SK-N-SH (cell line): ENCODE measurements at regions of chr22 and their contacts with region 1.

Region 1: DNA sequence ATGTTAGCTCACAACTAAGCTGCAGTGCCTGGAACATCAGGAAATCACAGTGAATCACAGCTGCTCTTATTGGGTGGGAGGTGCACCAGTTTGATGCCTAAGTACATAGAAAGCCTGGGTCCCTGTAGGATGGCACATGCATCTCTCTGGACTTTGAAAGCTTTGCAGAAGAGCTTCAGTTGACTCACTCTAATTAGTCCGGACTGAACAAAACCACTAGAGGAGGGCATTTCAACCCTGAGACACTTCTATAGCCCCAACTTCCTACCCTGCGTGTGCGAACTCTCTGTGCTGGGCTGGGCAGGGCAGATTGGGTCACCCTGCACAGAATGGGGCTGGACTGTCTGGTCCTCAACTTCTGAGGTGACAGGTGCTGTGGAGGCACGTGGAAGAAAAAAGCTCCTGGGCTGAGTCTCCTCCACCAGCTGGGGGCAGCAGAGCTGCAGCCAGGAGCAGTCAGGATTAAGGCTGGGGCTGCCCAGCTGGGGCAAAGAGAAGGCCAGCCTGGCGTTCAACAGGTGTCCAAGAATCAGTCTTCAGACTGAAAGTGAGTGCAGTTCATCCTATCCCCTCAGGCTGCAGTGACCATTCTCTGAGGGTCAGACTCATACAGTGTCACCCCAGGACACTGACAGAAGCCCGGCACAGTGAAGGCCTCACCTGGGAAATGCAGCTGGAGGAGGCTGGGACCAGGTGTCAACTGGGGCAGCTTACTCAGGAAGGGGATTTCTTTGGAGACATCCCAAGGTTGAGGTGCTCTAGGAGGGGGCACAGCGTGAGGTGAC is 22.1 kb downstream of the GGTLC2 start:
- DNase-seq: no peak
- H3K4me3 ChIP-seq: no peak overlapping the region; a peak in 1 of 4 replicates
- H3K27ac ChIP-seq: no peak overlapping the region
- H3K4me1 ChIP-seq: no peaks in the 10 kb centered on the region
- H3K27me3 ChIP-seq: peaks cover 10% of the 10 kb centered on the region; the same call in 1 of the 2 replicates
- CTCF ChIP-seq: peak; percentile 53
- EP300 ChIP-seq: no peak
- RAD21 ChIP-seq: peak; percentile 34; the same call in 1 of the 2 replicates

Region 2: GRCh38 chr22:22687638-22688500 is 21.4 kb after region 1 on chr22:
- CTCF ChIA-PET with region 1: interaction called, 17 read pairs
- POLR2A ChIA-PET with region 1: no interaction called
- DNase-seq: peak; percentile 60
- H3K4me3 ChIP-seq: no peak overlapping the region
- H3K27ac ChIP-seq: no peak overlapping the region
- H3K4me1 ChIP-seq: no peaks in the 10 kb centered on the region; a peak in 1 of 4 replicates
- H3K27me3 ChIP-seq: no peaks in the 10 kb centered on the region
- CTCF ChIP-seq: peak; percentile 75
- EP300 ChIP-seq: no peak
- RAD21 ChIP-seq: peak; percentile 79